Psoas muscle (tissue), 8 donors: ENCODE measurements at regions of chr19 and their contacts with region 1.

Region 1: DNA sequence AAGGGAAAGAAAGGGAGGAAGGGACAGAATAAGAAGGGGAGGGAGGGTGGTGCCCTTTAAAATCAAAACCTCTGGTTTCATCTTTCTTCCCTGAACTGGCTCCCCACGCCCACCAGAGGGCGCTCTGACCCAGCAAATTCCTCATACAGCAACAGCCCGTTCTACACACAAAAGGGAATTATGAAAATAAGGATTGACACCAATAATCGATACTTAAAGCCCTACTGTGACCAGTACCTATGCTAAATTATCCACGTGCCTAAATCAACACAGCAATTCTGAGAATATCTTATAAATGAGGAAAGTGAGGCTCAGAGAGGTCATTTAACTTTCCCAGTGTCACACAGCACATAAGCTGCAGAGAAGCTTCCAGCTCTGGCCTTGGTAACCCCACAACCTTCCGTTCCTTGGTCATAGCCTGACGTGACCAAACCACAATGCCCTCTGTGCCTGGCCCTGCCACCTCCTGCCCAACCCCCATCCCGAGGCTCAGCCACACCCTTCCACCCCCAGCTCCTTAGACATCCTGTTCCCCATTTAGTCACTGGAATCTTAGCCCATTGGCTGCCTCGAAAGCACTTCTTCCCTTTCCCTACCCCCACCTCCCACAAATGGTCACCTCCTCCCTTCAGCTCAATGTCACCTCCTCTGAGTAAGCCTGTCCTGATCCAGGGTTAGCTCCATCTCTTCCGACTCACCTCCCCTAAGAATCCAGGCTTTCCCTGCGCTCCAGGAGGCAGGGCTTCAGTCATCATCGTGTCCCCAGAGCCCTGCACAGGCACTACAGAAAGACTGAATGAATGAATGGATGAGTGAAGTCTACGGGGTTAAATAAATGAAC is 34.2 kb upstream of the PNMA8B start:
- DNase-seq: peak; percentile 70 to 80
- ATAC-seq: peak; percentile 55 to 84 (median 66)
- H3K4me3 ChIP-seq: no peak overlapping the region
- H3K27ac ChIP-seq: no peak overlapping the region
- H3K4me1 ChIP-seq: no peaks in the 10 kb centered on the region
- H3K27me3 ChIP-seq: peaks cover 0 to 10% (median 2%) of the 10 kb centered on the region in 3 donors
- CTCF ChIP-seq: peak; percentile 90

Region 2: GRCh38 chr19:46542428-46543230 is 12.8 kb after region 1 on chr19:
- intact Hi-C with region 1: loop called in 1 of 2 experiments (anchors 2 kb)
- DNase-seq: peak; percentile 89 to 91
- ATAC-seq: peak; percentile 81 to 93 (median 84)
- H3K4me3 ChIP-seq: no peak overlapping the region
- H3K27ac ChIP-seq: no peak overlapping the region
- H3K4me1 ChIP-seq: peaks cover 4% of the 10 kb centered on the region
- H3K27me3 ChIP-seq: no peaks in the 10 kb centered on the region
- CTCF ChIP-seq: peak; percentile 93

Region 3: DNA sequence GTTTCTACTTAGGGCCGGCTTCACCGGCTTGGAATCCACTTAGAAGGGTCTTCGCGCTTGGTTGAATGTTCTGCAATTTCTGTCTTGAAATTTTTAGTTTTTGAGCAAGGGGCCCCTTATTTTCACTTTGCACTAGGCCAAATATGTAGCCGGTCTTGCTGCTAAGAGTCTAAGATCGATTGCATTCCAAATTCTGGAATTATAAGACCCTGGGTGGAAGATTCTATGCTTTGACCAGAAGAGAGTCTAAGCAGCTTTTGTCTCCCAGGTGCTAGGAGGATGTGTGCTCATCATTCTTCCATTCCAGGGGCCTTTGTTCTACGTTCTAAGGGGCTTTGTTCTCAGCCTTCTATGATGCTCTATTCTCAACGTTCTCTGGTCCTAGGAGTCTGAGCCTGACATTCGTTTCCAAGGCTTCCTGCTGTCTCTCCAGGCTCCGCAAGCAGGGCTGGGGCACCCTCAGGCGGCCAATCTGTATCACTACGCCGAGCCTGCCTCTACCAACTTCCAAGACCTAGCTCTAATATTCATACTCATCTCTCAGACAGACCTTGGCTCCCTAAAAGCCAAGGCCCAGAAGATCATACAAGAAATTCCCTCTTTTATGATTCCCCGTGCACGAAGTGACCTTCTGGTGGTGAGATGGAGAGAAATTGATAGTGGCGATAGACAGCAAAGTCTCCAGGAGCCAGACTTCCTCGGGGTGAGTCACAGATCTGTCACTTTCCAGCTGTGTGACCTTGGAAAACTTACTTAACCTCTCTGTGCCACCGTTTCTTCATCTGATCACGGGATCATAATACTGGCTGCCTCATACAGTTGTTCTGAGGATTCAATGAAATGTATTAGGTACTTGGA is 132.1 kb after region 1 on chr19:
- intact Hi-C with region 1: loop called in 1 of 2 experiments (anchors 2 kb)
- DNase-seq: peak; percentile 84 to 90
- ATAC-seq: peak; percentile 71 to 84 (median 74)
- H3K4me3 ChIP-seq: peak overlapping the region; percentile 70
- H3K27ac ChIP-seq: peak overlapping the region; percentile 67
- H3K4me1 ChIP-seq: peaks cover 14% of the 10 kb centered on the region
- H3K27me3 ChIP-seq: peaks cover 0 to 29% (median 5%) of the 10 kb centered on the region in 3 donors
- CTCF ChIP-seq: peak; percentile 90